Right ventricle myocardium superior (tissue), 1 donor: ENCODE measurements at regions of chr6 and their contacts with region 1.

Region 1: DNA sequence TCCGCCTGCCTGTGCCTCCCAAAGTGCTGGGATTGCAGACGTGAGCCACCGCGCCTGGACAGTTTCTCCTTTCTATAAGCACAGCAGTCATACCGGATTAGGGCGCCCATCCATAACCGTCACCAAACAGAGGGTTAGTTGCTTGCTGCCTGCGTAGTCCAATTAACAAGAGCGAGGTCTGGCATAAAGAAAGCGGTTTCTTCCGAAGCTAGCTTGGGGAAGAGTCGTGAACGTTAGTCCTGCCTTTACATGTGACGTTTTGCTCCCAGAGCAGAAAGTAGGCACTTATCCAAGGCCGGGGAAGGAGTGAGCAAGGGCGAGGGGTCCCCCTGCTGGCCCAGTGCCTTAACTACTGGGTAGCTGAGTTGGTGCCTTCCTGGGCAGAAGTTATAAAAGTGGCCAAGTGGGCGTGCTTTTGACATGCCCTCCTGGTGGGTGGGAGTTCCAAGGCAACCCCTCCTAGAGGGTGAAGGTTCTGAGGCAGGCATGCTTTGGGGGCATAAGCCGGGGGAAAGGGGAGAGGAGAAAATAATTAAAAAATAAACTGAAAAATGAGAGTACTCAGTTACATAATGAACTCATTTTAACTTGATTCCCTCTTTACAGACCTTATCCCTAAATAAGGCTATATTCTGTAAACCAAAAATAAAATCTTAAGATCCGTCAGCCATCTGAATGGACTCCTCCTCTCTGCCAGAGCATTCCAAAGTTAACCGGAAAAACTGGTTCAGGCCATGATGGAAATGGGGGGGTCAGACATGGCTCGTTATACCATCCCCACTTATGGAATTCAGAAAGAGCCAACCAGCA is 88.0 kb downstream of the FAM217A start:
- DNase-seq: peak; percentile 91
- ATAC-seq: peak; percentile 97

Region 2: GRCh38 chr6:3281631-3282475 is 709.0 kb before region 1 on chr6:
- intact Hi-C with region 1: loop called (anchors 10 kb)
- DNase-seq: peak; percentile 40
- ATAC-seq: no peak

Region 3: DNA sequence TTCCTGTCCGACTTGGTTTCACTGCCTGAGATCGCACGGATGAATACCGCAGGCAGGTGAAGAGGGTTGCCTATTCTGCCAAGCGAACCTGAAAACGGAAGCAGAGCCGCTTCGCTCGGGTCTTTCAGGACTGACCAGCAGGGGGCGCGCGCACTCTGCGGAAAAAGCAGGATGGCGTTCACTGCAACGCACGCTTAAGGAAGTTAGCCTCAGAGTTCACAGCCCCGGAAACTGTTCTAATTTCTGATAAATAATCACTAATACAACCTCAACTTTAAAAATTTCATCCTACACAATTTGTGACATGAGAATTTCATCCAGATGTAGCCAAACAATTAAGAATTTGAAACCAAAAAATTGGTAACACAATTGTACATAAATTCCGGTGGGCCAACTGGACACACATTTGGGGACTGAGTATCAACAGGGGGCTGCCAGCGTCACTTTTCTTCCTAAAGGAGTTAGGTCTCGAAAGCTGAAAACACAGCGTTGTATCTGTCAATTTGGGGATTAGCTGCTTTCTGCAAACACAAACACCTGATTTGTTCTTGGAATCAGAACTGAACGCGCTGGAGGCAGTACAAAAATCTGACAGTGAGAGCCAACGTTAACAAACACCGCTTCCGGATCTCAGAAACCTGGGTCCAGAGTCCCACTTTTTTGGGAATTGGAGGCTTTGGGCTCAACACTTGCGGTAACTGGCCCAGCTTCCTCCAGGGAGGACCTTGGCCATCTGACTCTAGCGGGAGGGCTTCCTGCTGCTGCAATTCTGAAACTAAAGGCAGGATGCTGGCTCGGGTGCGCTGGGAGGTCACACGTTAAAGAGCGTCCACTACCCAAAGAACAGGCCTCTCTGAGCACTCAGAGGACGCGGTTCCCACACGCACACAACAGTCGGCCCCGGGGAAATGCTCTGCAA is 248.2 kb before region 1 on chr6:
- intact Hi-C with region 1: loop called (anchors 5 kb)
- DNase-seq: peak; percentile 92
- ATAC-seq: peak; percentile 87

Region 4: DNA sequence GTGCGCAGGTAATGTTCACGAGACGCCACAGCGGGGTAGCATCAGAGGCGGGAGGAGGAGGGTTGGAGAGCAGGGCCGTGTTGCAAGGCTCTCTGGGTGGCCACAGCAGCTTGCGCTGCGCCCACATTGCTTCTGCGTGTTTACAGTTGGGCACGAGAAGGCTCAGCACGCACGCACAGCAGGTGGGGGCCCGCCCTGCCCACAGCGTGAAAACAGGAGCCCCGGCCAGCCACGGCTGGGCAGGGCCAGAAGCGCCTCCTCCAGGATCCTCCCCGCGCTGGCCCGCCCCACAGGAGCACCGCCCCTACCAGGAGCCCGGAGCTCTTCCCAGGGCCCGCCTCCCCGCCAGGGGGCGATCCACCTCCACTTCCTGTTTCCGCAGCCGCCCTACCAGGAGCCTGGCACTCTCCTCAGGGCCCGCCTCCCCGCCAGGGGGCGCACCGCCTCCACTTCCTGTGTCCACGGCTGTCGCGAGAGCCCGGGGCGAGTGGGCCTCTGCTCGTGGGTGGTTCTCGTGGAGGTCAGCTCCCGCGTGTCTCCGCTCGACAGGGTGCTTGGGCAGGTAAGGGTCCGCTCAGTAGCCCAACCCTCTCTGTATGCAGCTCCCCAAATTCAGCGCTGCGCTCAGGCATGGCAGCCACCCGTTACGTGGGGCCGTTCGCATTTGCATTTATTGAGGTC is 141.8 kb before region 1 on chr6 and contains the start of gene FAM50B:
- intact Hi-C with region 1: loop called (anchors 10 kb)
- DNase-seq: peak; percentile 96
- ATAC-seq: peak; percentile 98
- total RNA-seq, gene FAM50B: 28.9 TPM

Region 5: GRCh38 chr6:4145083-4145482 is 154.2 kb after region 1 on chr6:
- intact Hi-C with region 1: no loop called
- DNase-seq: no peak
- ATAC-seq: no peak